ENCODE measurements at regions of chr18 and their contacts with region 1.

Region 1: DNA sequence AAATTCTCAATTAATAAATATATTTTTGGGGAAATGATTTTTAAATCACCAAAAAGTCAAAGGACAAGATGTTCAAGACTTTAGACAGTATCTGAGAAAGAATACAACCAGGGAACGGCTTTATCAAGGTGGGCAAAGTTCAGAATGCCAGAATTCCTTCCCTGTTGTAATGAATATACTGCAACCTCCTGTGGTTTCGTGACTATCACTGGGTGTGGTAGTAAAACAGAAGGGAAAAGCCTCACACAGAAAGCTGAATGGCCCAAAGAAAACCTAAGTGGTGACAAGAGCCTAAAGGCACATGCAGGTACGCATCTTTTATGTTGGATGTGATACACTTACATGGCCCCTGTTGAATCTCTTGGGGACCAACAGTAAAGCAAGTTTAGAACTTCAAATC is 37.1 kb downstream of the MBD2 start:
- DNase-seq: no peak
- H3K4me3 Mint-ChIP-seq: no peak overlapping the region
- H3K27ac Mint-ChIP-seq: no peak overlapping the region
- H3K4me1 Mint-ChIP-seq: peaks cover 13% of the 10 kb centered on the region
- H3K27me3 Mint-ChIP-seq: no peaks in the 10 kb centered on the region
- CTCF ChIP-seq: no peak

Region 2: DNA sequence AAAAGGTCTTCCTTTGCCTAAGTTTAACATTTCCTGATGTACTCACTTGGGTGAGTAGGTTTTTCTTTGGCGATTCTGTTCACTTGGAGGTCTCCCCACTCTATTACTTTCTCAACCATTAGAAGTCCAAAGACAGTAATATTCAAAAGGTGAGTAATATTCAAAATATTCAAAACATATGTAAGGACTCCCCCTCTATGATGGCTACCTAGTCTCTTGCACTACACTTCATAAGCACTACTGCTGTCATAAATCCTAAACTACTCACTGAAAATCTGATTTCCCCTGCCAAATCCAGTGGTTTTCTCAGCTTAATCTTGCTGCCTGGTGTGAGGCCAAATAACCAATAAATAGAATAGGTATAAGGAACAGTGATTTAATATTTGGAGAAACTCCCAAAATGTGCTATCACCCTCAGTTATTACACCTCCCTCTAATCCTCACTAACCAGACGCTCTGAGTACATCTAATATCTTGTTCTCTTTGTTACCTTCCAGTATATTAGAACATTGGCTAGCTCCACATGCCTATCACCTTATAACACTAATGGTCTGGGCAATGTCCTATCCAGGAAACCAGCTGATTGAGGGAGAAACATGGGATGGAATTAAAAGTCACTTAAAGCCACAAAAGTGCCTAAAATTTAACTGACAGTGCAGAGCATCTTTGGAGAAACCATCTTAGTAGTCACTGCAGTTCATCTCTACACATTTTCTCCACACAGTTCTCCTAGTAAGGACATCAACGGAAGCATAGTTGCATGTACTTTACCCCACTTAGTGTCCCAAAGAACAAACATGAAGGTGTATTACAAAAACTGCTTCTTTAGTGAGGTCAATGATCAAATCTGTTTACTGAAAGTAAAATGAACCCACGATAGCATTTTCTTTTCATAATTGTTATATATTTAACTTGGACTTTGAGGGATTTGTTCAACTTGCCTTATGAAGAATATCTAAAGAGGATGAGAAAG is 17.7 kb before region 1 on chr18:
- CTCF ChIA-PET with region 1: no interaction called
- intact Hi-C with region 1: loop called (anchors 2 kb)
- DNase-seq: no peak
- H3K4me3 Mint-ChIP-seq: no peak overlapping the region
- H3K27ac Mint-ChIP-seq: no peak overlapping the region
- H3K4me1 Mint-ChIP-seq: peaks cover 13% of the 10 kb centered on the region
- H3K27me3 Mint-ChIP-seq: no peaks in the 10 kb centered on the region
- CTCF ChIP-seq: no peak